ENCODE measurements at regions of chr1 and their contacts with region 1.

Region 1: GRCh38 chr1:67347688-67348472 is 40.2 kb downstream of the IL12RB2 start:
- DNase-seq: peak in 1 of 2 donors; percentile 67
- ATAC-seq: peak; percentile 84 to 96
- H3K4me3 ChIP-seq: no peak overlapping the region
- H3K27ac ChIP-seq: peak overlapping the region in 2 of 4 donors; percentile 3 to 21
- H3K4me1 ChIP-seq: peaks cover 0 to 10% of the 10 kb centered on the region in 2 donors
- H3K27me3 ChIP-seq: no peaks in the 10 kb centered on the region
- CTCF ChIP-seq: peak; percentile 68 to 81 (median 76)
- POLR2A ChIP-seq: no peak

Region 2: GRCh38 chr1:67230539-67230938 is 117.3 kb before region 1 on chr1:
- in situ Hi-C with region 1: no loop called
- intact Hi-C with region 1: loop called (anchors 10 kb)
- DNase-seq: no peak
- ATAC-seq: no peak
- H3K4me3 ChIP-seq: no peak overlapping the region
- H3K27ac ChIP-seq: no peak overlapping the region
- H3K4me1 ChIP-seq: no peaks in the 10 kb centered on the region
- H3K27me3 ChIP-seq: no peaks in the 10 kb centered on the region
- CTCF ChIP-seq: no peak
- POLR2A ChIP-seq: no peak

Region 3: DNA sequence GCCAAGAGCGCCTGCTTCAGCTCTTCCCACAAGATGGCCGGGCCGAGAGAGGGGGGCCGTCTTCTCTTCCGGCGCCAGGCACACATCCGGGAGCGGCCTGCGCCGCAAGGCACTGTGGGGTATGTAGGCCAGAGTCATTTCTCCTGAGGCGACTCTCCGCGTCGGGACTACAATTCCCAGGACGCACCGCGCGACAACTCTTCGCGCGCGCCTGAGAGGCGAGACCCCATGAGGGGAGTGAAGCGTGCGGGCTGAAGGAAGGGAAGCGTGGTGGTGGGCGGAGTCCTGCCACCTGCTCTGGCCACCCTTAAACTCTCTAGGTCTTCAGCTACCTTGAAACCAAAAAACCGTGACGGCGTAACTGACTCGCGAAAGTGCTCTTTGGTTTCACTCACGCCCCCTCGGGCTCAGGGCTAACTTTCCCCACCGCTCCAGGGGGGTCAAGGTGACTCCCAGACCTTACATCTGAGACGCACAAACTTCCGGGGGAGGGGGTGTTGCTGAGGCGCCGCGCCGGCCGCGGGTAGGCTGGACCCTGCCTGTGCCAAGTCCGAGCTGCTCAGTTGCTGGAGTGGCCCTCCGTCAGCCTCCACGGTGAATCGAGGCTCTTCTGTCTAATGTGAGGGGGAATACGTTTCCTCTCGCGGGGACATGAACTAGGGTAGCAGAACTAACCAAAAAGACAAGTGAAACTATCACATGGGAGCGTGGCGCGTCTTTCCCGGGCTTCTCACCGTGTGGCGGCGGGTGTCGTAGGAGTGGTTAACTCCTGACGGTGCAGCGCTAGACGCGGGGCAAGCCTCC is 82.7 kb after region 1 on chr1 and contains the start of gene SERBP1:
- in situ Hi-C with region 1: no loop called
- intact Hi-C with region 1: loop called (anchors 10 kb)
- DNase-seq: peak; percentile 94 to 97
- ATAC-seq: peak; percentile 87
- H3K4me3 ChIP-seq: peak within 1 kb of the TSS; percentile 82 to 96 (median 90)
- H3K27ac ChIP-seq: peak within 1 kb of the TSS; percentile 93 to 99 (median 97)
- H3K4me1 ChIP-seq: peaks cover 53 to 61% of the 10 kb centered on the region in 2 donors
- H3K27me3 ChIP-seq: no peaks in the 10 kb centered on the region
- CTCF ChIP-seq: no peak
- POLR2A ChIP-seq: peak; percentile 91 to 95
- total RNA-seq, gene SERBP1: 249 to 353 (median 311) TPM

Region 4: GRCh38 chr1:67489643-67490042 is 141.8 kb after region 1 on chr1:
- in situ Hi-C with region 1: loop called in 2 of 4 experiments (anchors 5 kb)
- intact Hi-C with region 1: loop called (anchors 1 kb)
- DNase-seq: no peak
- ATAC-seq: peak; percentile 90 to 92
- H3K4me3 ChIP-seq: no peak overlapping the region
- H3K27ac ChIP-seq: no peak overlapping the region
- H3K4me1 ChIP-seq: no peaks in the 10 kb centered on the region
- H3K27me3 ChIP-seq: no peaks in the 10 kb centered on the region
- CTCF ChIP-seq: peak; percentile 23 to 54 (median 26)
- POLR2A ChIP-seq: no peak

Measured in gastrocnemius medialis (tissue), 4 donors.